Astrocyte of the cerebellum (primary cell): ENCODE measurements at regions of chr12 and their contacts with region 1.

Region 1: GRCh38 chr12:65565601-65566560 is 258.4 kb upstream of the HMGA2 start:
- DNase-seq: peak; percentile 91
- H3K4me3 ChIP-seq: no peak overlapping the region
- CTCF ChIP-seq: no peak

Region 2: DNA sequence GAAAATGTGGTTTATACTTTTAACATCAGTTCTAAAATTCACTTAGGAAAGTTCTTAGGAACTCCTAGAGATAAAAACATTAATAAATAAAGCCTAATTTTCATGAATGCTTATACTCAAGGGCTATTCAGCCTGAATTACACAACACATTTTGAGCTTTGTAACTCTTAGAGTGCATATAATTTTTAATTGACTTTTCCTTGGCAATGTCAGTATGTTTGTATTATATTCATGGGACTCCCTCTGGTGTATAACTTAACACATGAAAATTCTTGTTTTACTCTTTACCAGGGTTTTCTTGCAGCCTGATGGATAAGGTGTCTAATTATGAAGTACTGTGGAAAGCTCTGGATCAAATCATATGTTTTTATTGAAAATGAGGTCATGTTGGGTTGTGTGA is 107.9 kb after region 1 on chr12:
- in situ Hi-C with region 1: loop called (anchors 10 kb)
- DNase-seq: no peak
- H3K4me3 ChIP-seq: no peak overlapping the region
- CTCF ChIP-seq: no peak